ENCODE measurements at regions of chr7 and their contacts with region 1.

Region 1: DNA sequence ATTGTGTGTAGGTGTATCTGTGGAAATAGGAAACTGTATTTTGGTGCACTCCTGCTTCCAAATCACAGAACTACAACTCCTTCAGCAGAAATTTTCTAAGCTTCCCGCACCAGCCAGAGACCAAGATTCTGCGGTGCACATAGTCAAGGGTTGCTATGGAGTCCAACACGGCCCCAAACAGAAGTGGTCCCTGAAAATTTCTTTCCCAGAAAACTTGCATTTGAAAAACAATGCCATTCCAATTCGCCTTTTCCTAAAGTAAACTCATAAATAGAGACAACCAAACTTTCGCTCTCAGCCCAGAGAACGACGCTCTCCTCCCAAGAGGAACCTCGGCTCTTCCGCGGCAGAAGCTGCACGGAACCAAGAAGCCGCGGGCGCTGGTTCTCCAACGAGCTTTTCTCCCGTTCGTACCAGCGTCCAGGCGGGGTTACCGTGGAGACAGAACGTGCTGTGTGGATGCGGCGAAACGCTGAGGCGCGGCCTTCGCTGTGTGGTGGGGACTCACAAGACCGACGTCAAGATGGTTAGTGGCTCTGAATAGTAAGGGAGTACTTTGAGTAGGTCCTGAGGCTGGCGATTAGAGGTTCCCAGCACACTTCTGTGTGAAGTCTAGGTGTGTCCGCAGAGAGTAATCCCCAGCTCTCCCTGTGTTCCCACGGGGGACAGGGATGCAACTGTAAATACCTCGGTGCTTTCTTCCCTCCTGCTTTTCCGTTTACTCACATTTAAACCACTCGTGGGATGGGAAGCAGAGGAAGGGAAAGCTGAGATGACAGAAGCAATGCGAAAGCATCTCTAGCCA is 24.0 kb upstream of the ZC3HAV1 start:
- DNase-seq: peak; percentile 96
- H3K4me3 Mint-ChIP-seq: peak overlapping the region; percentile 85
- H3K27ac Mint-ChIP-seq: peak overlapping the region; percentile 75
- H3K4me1 Mint-ChIP-seq: peaks cover 28% of the 10 kb centered on the region
- H3K27me3 Mint-ChIP-seq: peaks cover 4% of the 10 kb centered on the region

Region 2: DNA sequence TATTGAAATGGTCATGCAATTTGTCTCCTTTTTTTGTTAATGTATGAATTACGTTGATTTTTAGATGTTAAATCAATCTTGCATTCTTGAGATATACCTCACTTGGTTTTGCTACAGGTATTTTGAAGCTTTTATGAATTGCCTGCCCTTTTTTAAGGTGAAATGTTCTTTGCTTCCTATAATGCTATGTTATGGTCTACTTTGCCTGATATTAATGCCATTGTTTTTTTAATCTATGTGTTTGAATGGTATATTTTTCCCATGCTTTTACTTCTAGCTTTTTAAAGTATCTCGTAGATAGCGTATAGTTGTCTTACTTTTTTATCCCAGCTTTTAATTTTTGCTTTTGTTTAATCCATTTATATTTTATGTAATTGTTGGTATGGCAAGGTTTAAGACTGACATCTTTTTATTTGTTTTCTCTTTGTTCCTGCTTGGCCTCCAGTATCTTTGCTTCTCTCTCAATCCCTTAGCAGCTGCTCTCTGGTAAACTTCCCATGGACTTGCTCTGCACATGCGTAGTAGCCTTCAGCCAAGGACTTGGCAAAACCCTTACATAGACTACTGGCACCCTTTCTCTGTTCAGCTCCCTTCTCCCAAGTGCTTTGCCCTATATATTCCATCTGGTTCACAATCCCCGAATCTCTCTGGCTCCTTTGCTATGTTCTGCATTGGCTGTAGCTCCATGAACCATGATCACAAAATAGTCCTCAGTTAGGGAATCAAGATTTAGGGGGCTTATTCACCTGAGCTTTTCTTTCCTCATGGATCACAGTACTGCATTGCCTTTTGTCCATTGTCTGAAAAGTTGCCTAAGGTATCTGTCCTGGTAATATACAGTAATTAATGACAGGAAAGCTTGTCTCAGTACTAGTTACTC is 665.1 kb before region 1 on chr7:
- intact Hi-C with region 1: no loop called
- DNase-seq: no peak
- H3K4me3 Mint-ChIP-seq: no peak overlapping the region
- H3K27ac Mint-ChIP-seq: no peak overlapping the region
- H3K4me1 Mint-ChIP-seq: peaks cover 24% of the 10 kb centered on the region
- H3K27me3 Mint-ChIP-seq: no peaks in the 10 kb centered on the region

Region 3: DNA sequence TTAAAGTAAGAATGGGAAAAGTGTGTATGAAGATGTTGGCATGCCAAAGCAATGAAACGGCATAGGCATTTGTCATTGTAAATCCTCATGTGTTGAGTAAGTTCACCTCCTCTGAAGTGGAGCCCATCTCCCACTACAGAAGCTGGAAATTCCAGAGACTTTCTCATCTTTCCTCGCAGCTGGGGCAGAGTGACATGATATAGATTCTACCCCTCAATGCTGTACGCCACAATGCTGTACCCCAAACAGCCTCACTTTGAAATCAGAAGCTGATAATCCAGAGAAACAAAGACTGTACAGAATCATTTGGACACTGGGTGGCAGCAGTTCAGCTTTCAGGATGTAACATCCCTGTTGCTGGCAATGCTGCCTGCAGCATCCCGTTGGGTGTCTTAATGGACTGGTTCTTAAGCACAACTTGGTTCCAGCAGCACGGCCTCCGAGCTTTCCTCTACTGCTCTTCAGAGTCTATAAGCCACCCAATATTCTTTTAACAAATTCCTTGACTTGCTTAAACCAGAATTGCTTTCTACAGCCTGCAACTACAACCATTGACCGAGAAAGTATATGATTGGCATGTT is 116.5 kb before region 1 on chr7:
- intact Hi-C with region 1: loop called (anchors 5 kb)
- DNase-seq: peak; percentile 89
- H3K4me3 Mint-ChIP-seq: no peak overlapping the region
- H3K27ac Mint-ChIP-seq: no peak overlapping the region
- H3K4me1 Mint-ChIP-seq: peaks cover 7% of the 10 kb centered on the region
- H3K27me3 Mint-ChIP-seq: peaks cover 17% of the 10 kb centered on the region

Region 4: GRCh38 chr7:139109188-139109982 is 24.2 kb before region 1 on chr7 and contains the start of gene ZC3HAV1:
- intact Hi-C with region 1: loop called (anchors 1 kb)
- DNase-seq: peak; percentile 97
- H3K4me3 Mint-ChIP-seq: peak within 1 kb of the TSS; percentile 97
- H3K27ac Mint-ChIP-seq: peak within 1 kb of the TSS; percentile 92
- H3K4me1 Mint-ChIP-seq: peaks cover 24% of the 10 kb centered on the region
- H3K27me3 Mint-ChIP-seq: no peaks in the 10 kb centered on the region
- total RNA-seq, gene ZC3HAV1: 86.1 and 90.5 TPM in 2 replicates

Region 5: DNA sequence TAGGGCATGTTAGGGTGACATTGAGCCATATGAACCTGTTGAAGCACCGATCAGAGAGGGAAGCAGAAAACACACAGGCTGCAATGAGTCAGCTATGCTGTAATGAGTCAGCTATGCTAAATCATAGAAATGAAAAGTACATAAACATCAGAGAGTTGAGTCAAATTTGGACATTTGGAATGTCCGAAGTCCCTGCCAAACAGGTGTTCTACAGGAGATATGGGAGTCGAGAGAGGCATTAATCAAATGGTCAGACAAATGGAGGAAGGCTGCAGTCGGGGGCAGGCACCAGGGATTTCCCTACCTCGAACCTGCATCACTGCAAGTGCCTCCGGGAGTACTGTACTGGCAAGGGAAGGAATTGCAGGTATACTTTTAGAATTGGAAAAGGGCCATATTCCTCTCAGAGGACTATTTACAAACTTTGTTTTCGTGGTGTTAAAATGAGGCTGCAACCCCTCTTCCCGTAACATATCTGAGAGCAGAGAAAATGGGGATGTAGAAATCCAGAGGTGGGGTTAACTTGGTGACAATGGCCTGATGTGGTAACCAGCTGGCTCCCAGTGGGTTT is 15.2 kb before region 1 on chr7:
- intact Hi-C with region 1: loop called (anchors 1 kb)
- DNase-seq: peak; percentile 75
- H3K4me3 Mint-ChIP-seq: peak overlapping the region; percentile 49
- H3K27ac Mint-ChIP-seq: peak overlapping the region; percentile 59
- H3K4me1 Mint-ChIP-seq: peaks cover 23% of the 10 kb centered on the region
- H3K27me3 Mint-ChIP-seq: no peaks in the 10 kb centered on the region

Region 6: DNA sequence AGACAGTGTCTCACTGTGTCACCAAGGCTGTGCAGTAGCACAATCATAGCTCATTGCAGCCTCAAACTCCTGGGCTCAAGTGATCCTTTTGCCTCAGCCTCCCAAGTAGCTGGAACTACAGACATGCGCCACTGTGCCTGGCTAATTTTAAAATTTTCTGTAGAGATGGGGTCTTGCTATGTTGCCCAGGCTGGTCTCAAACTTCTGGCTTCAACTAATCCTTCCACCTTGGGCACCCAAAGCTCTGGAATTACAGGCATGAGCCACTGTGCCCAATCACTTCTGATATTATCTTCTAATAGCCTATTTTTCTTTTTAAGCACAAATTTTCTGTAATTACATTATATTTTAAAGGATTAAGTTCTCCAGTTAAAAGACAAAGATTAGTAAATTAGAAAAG is 18.6 kb after region 1 on chr7:
- intact Hi-C with region 1: no loop called
- DNase-seq: no peak
- H3K4me3 Mint-ChIP-seq: no peak overlapping the region
- H3K27ac Mint-ChIP-seq: no peak overlapping the region
- H3K4me1 Mint-ChIP-seq: peaks cover 4% of the 10 kb centered on the region
- H3K27me3 Mint-ChIP-seq: no peaks in the 10 kb centered on the region

Region 7: DNA sequence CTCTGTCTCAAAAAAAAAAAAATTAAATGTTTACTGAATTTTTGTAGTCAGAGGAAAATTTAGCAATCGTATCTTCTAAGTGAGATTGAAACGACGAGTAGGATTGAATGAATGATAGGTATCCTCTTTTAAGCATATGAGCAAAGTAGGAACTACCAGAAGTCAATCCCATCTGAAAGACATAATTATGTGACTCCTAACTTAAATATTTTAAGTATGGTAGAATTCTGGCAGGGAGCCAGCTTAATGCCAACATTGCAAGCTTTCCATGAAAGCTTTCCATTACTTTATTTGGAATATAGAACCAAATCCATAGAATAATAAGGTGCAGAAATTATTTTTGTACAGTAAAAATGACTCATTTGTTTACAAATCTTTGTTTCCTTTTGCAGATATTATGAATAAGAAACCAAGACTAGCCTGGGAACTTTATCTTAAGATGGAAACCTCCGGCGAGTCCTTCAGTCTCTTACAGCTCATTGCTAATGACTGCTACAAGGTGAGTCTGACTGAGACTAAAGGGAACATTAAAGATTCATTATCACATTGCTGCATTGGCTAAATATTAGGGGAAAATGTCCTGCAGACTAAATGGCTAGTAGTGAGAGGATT is 47.3 kb after region 1 on chr7:
- intact Hi-C with region 1: no loop called
- DNase-seq: no peak
- H3K4me3 Mint-ChIP-seq: no peak overlapping the region
- H3K27ac Mint-ChIP-seq: no peak overlapping the region
- H3K4me1 Mint-ChIP-seq: peaks cover 3% of the 10 kb centered on the region
- H3K27me3 Mint-ChIP-seq: no peaks in the 10 kb centered on the region

Region 8: DNA sequence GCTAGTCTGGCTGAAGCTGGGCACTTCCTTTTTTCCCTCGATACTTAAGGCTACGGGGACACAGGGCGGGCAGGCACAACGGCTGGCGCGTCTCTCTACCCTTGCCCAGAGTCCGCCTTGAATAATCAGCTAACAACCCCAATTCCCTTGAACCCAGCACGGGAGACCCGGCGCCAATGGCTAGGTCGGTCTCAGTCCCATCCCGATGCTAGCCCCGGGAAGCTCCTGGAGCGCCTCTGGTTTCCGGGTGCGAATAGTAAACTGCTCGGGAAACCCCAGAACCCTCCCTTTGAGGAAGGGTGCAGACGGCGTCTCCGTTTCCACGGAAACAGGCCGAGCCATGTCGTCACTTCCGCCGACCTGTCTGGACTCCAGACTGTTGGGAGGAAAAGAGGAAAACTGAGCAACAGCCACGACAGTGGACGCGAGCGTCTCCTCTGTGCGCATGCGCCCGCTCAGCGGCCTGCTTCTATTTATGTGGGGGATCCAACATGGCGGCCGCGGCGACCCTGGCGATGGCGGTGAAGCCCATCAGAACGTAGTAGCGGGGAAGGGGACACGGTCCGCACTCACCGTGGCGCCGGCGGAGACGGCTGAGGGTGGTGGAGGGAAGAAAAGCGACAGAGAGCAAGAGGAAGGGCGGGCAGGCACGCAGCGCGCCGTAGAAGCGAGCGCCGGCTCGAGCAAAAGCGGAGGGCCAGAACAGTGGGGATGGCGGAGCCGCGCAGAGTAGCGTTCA is 97.4 kb after region 1 on chr7 and contains the start of gene UBN2:
- intact Hi-C with region 1: loop called (anchors 1 kb)
- DNase-seq: peak; percentile 97
- H3K4me3 Mint-ChIP-seq: peak within 1 kb of the TSS; percentile 98
- H3K27ac Mint-ChIP-seq: peak within 1 kb of the TSS; percentile 97
- H3K4me1 Mint-ChIP-seq: peaks cover 20% of the 10 kb centered on the region
- H3K27me3 Mint-ChIP-seq: peaks cover 21% of the 10 kb centered on the region
- total RNA-seq, gene UBN2: 12.5 and 15.2 TPM in 2 replicates

Region 9: GRCh38 chr7:139340037-139340807 is 206.7 kb after region 1 on chr7:
- intact Hi-C with region 1: loop called (anchors 1 kb)
- DNase-seq: peak; percentile 99
- H3K4me3 Mint-ChIP-seq: peak overlapping the region; percentile 91
- H3K27ac Mint-ChIP-seq: peak overlapping the region; percentile 93
- H3K4me1 Mint-ChIP-seq: peaks cover 19% of the 10 kb centered on the region
- H3K27me3 Mint-ChIP-seq: peaks cover 4% of the 10 kb centered on the region